ENCODE measurements at regions of chr11 and their contacts with region 1.

Region 1: DNA sequence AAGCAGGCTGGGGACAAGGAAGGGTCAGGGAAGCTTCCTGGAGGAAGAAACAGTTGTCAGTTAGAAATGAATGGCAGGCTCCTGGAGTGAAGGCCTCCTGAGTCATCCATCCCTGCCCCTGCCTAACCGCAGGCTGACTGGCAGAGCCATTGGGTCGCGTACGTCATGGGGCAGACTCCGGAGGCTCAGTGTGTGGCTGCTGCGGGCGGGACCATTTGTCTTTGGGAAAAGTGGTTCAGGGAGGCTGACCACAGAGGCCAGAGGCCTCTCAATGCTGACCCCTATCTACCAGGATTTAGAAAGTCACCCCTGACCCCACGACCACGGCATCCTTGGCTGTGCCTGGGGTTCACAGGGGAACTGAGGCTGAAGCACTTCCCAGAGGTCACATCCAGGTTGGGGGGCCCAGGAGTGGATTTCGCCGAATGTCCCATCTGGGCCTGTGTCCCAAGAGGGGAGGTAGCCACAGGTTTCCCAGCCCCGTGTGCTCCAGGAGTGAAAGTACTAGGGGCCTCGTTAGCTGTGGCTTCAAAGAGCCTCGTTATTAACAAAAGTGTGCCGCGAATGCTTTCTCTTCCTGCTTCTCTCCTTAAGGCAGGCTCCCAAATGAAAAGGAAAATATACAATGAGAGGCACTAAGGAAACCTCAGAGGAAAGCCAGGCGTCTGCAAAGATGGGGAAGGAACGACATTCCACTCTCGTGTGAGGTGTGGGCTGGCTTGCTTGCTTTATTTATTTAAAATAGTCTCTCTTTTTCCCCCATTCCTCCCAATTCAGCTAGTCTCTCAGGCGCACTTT is 58.9 kb downstream of the FLRT1 start:
- DNase-seq: peak; percentile 56 to 66 (median 60)
- ATAC-seq: peak; percentile 29
- H3K4me3 ChIP-seq: no peak overlapping the region
- H3K27ac ChIP-seq: no peak overlapping the region
- H3K4me1 ChIP-seq: peaks cover 13 to 57% of the 10 kb centered on the region in 2 experiments
- H3K27me3 ChIP-seq: no peaks in the 10 kb centered on the region
- CTCF ChIP-seq: peak; percentile 20 to 43 (median 38); a peak in 5 of 6 replicates
- EP300 ChIP-seq: 0 out of 2 replicates have a peak, but pooled peaks have one; percentile 11
- POLR2A ChIP-seq: no peak
- RAD21 ChIP-seq: peak in 1 of 2 experiments; percentile 29; a peak in 2 of 4 replicates

Region 2: GRCh38 chr11:64000026-64000739 is 94.5 kb before region 1 on chr11:
- CTCF ChIA-PET with region 1: no interaction called
- POLR2A ChIA-PET with region 1: no interaction called
- in situ Hi-C with region 1: no loop called
- intact Hi-C with region 1: loop called (anchors 10 kb)
- DNase-seq: no peak
- ATAC-seq: no peak
- H3K4me3 ChIP-seq: no peak overlapping the region
- H3K27ac ChIP-seq: no peak overlapping the region
- H3K4me1 ChIP-seq: peaks cover 0 to 62% of the 10 kb centered on the region in 2 experiments; a peak in 2 of 5 replicates
- H3K27me3 ChIP-seq: no peaks in the 10 kb centered on the region
- CTCF ChIP-seq: no peak
- EP300 ChIP-seq: no peak
- POLR2A ChIP-seq: no peak
- RAD21 ChIP-seq: no peak